ENCODE measurements at regions of chr4 and their contacts with region 1.

Region 1: DNA sequence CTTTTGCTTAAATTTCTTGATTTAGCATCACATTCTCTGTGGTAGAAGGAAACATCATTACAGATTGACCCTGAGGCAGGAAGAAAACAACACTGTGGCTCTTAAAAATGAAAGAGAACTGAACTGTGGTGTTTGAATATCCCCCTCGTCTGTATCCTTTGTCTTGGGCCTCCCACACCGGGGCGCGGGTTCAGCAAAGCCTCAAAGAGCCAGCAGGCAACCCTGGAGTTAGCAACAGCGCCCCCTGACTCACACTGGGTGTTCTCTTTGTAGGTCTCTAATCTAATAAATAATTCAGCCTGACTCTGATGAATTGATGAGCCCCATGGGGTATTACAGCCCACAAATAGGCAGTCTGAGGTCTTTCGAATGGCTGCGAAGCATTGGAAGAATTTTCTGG is 46.1 kb upstream of the CTSO start:
- DNase-seq: no peak
- H3K4me3 Mint-ChIP-seq: no peak overlapping the region
- H3K27ac Mint-ChIP-seq: no peak overlapping the region
- H3K4me1 Mint-ChIP-seq: peaks cover 11% of the 10 kb centered on the region
- H3K27me3 Mint-ChIP-seq: no peaks in the 10 kb centered on the region
- CTCF ChIP-seq: no peak

Region 2: GRCh38 chr4:155906554-155907247 is 93.0 kb before region 1 on chr4:
- CTCF ChIA-PET with region 1: no interaction called
- POLR2A ChIA-PET with region 1: no interaction called
- intact Hi-C with region 1: no loop called
- DNase-seq: peak; percentile 94
- H3K4me3 Mint-ChIP-seq: no peak overlapping the region
- H3K27ac Mint-ChIP-seq: no peak overlapping the region
- H3K4me1 Mint-ChIP-seq: peaks cover 9% of the 10 kb centered on the region
- H3K27me3 Mint-ChIP-seq: no peaks in the 10 kb centered on the region
- CTCF ChIP-seq: no peak

Region 3: DNA sequence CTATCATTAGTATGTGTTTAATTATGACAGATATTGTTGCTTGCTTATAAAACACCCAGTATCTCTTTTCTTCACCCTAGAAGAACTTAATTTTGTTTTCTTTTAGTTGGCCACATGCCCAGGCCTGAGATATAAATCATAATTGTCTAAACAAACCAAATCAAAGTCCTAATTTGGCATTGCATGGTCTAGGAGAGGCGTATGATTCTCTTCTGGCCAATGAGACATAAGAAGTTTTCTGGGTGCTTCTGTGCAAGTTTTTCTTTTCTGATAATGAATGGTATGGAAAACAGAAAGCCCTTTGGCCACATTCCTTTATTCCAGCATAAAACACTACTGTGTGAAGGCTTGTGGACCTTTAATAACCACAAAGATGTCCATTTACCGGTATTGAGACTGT is 146.8 kb after region 1 on chr4:
- CTCF ChIA-PET with region 1: no interaction called
- POLR2A ChIA-PET with region 1: no interaction called
- intact Hi-C with region 1: loop called (anchors 10 kb)
- DNase-seq: no peak
- H3K4me3 Mint-ChIP-seq: no peak overlapping the region
- H3K27ac Mint-ChIP-seq: no peak overlapping the region
- H3K4me1 Mint-ChIP-seq: no peaks in the 10 kb centered on the region
- H3K27me3 Mint-ChIP-seq: no peaks in the 10 kb centered on the region
- CTCF ChIP-seq: no peak